Activated CD4-positive, alpha-beta T cell treated with anti-CD3 and anti-CD28 coated beads, Interleukin-2, amount 10 ng/mL, durations not matched to agents 24 days and 14 days (primary cell): ENCODE measurements at regions of chr1 and their contacts with region 1.

Region 1: DNA sequence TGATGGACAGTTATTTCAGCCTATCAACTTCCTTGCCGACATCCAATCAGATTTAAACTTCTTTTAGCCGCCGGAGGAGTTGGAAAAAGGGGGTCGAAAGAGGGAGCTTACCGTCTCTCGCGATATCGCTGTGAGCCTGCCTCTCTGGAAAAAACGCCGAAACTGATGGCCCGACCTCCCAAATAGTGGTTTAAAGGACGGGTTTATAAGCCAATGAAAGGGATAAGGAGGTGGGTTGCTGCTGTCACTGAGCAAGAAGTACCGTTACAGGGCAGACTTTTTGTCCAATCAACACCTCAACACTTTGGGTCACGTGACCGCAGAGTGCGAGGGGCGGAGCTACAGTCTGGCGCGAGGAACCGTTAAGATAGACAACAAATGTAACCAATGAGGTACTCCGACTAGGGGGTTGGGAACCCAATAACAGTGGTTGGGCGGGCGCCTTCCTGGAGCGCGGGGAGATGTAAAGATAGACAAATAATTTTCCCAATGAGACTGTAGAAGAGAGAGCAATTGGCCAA is at the start of gene RBM15:
- DNase-seq: peak; percentile 99
- H3K4me3 Mint-ChIP-seq: no peak within 1 kb of the TSS
- H3K27ac Mint-ChIP-seq: no peak within 1 kb of the TSS
- H3K4me1 Mint-ChIP-seq: peaks cover 60% of the 10 kb centered on the region
- H3K27me3 Mint-ChIP-seq: no peaks in the 10 kb centered on the region
- total RNA-seq, gene RBM15: 55.6 and 57.1 TPM in 2 replicates

Region 2: DNA sequence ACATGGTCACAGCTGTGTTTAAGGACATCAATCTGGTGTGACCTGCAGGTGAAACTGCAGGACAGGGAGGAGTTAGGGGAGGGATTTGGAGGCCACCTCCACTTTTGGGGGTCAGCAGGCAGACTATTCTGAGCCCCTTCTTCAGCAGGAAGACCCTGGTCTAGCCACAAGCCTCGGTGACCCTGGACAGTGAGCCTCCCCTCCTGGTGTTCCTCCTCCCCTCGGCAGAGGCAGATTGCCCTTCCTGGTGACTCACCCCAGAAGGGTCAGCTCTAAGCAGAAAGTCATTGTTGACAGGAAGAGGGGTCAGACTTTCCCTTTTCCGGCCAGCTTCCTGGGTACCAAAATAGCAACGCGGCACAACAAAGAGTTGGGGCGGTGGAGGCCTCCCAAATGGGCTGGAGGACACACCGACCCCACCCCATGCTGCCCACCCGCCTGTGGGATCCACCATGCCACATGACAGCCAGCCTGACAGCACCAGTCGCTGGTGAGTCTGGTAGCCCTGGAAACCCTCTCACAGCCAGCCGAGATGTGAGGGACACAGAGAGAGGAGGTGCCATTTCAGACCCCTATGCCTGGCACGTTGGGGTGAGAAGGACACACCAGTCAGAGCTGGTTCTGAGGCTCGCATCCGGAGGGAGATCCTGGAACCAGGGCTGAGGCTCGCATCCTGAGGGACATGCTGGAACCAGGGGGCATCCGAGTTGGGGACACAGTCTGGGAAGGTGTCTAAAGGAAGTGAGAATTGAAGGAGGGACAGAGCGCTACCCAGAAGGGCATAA is 443.0 kb before region 1 on chr1:
- intact Hi-C with region 1: loop called (anchors 10 kb)
- DNase-seq: peak; percentile 77
- H3K4me3 Mint-ChIP-seq: no peak overlapping the region
- H3K27ac Mint-ChIP-seq: no peak overlapping the region
- H3K4me1 Mint-ChIP-seq: peaks cover 27% of the 10 kb centered on the region
- H3K27me3 Mint-ChIP-seq: no peaks in the 10 kb centered on the region

Region 3: GRCh38 chr1:110209715-110210603 is 129.0 kb before region 1 on chr1 and contains the start of gene KCNC4:
- intact Hi-C with region 1: loop called (anchors 1 kb)
- DNase-seq: peak; percentile 97
- H3K4me3 Mint-ChIP-seq: peak within 1 kb of the TSS; percentile 94
- H3K27ac Mint-ChIP-seq: peak within 1 kb of the TSS; percentile 94
- H3K4me1 Mint-ChIP-seq: peaks cover 42% of the 10 kb centered on the region
- H3K27me3 Mint-ChIP-seq: peaks cover 7% of the 10 kb centered on the region
- total RNA-seq, gene KCNC4: 19.5 and 20.0 TPM in 2 replicates

Region 4: DNA sequence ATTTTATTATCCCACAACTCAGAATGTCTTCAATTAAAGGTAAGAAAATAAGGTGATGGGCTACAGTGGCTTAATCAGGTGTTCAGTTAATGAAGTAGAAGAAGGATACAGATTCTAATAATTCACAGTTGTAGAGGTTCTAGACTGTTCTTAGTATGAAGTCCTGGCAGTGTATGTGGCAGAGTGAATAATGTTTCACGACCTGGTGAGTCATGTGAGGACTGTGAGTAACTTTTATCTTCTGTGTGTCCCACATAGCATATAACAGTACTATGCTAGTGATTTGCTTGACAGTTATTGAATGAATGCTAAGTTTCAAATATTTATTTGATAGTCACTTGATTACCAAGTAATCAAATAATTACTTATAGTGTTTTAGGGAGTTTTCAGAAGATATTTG is 31.9 kb after region 1 on chr1:
- intact Hi-C with region 1: loop called (anchors 2 kb)
- DNase-seq: no peak
- H3K4me3 Mint-ChIP-seq: no peak overlapping the region
- H3K27ac Mint-ChIP-seq: peak overlapping the region; percentile 61
- H3K4me1 Mint-ChIP-seq: peaks cover 9% of the 10 kb centered on the region
- H3K27me3 Mint-ChIP-seq: no peaks in the 10 kb centered on the region

Region 5: GRCh38 chr1:110879758-110880606 is 541.0 kb after region 1 on chr1:
- intact Hi-C with region 1: loop called (anchors 2 kb)
- DNase-seq: peak; percentile 91
- H3K4me3 Mint-ChIP-seq: peak overlapping the region; percentile 84
- H3K27ac Mint-ChIP-seq: peak overlapping the region; percentile 99
- H3K4me1 Mint-ChIP-seq: peaks cover 65% of the 10 kb centered on the region
- H3K27me3 Mint-ChIP-seq: no peaks in the 10 kb centered on the region